WTC11 (cell line): ENCODE measurements at regions of chr20 and their contacts with region 1.

Region 1: DNA sequence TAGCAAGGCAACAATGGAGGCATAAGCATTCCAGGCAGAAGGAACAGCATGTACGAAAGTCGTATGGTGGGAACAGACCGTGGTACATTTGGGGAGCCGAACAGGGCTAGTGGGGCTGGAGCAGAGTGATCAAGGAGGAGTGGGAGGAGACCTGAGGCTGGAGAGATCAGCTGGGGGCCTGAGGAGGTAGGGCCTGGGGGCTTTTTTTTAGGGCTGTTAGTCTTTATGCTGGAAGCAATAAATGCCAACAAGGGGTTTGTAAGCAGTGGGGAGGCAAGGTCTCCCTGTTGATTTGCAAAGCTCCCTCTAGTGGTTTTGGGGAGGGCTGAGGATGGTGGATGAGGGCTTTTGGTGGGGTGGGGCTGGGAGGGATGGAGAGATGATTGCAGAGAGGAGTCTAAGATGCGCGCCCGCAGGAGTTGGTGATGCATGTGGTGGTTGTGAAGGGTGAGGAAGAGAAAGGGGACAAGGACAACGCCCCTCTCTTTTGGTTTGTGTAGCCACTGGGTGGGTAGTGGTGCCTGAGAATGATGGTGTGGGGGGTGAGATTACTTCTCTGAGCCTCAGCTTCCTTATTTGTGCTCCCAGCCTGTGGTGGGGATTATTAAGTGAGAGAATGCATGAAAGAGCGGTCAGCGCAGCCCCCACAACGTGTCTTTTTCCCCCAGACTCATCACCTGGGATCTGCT is 74.1 kb upstream of the TOX2 start:
- DNase-seq: peak; percentile 52
- ATAC-seq: peak; percentile 86
- H3K4me3 Mint-ChIP-seq: no peak overlapping the region
- H3K27ac Mint-ChIP-seq: no peak overlapping the region
- H3K4me1 Mint-ChIP-seq: no peaks in the 10 kb centered on the region; the same call in 1 of the 2 replicates
- H3K27me3 Mint-ChIP-seq: no peaks in the 10 kb centered on the region; the same call in 1 of the 2 replicates
- CTCF ChIP-seq: no peak; the same call in 1 of the 2 replicates

Region 2: DNA sequence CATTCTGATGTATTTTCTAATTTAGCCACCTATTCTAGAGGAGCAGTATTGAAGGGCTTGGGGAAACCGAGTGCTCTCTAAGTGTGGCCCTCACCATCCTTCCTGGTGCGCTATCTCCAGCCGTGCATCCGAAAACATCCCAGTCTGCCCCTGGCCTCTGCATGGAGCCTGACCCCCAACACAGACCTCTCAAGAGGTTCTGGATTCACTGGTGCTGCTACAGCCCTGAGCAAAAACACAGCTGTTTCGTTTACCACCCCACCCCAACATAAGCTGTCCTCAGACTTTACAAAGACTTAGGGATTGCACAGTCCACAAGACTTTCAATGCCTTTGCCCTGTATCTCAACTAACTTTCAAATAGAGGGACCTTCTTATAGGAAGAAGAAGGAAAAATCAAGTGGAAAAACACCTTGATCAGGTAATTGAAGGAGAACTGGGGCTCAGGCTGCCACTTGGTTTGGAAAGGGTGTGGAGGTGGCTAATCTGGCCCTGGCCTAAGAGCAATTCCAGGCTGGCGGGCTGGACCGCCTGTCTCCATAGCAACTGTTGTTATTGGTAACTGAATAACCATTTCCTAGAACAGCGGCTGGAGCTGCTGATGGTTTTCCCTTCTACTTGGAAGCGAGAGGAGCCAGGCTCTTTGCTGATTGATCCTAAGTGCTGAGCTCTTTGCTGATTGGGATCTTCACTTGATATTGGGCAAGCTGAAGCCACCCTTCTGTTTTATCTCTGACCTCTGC is 16.0 kb before region 1 on chr20:
- CTCF ChIA-PET with region 1: interaction called, 10 read pairs
- POLR2A ChIA-PET with region 1: no interaction called
- DNase-seq: peak; percentile 30
- ATAC-seq: peak; percentile 50; the same call in 1 of the 2 replicates
- H3K4me3 Mint-ChIP-seq: no peak overlapping the region
- H3K27ac Mint-ChIP-seq: no peak overlapping the region
- H3K4me1 Mint-ChIP-seq: no peaks in the 10 kb centered on the region
- H3K27me3 Mint-ChIP-seq: peaks cover 12% of the 10 kb centered on the region; the same call in 1 of the 2 replicates
- CTCF ChIP-seq: no peak